ENCODE measurements at regions of chr2 and their contacts with region 1.

Region 1: GRCh38 chr2:173997269-173997668 is 32.1 kb upstream of the SP3 start:
- DNase-seq: peak; percentile 77 to 91 (median 87)
- ATAC-seq: peak; percentile 83 to 97 (median 96)
- H3K4me3 ChIP-seq: no peak overlapping the region
- H3K27ac ChIP-seq: peak overlapping the region in 6 of 12 donors; percentile 23 to 88 (median 51)
- H3K4me1 ChIP-seq: peaks cover 4 to 50% (median 33%) of the 10 kb centered on the region in 12 donors
- H3K27me3 ChIP-seq: no peaks in the 10 kb centered on the region
- CTCF ChIP-seq: no peak
- POLR2A ChIP-seq: no peak

Region 2: GRCh38 chr2:173965329-173966025 is 31.8 kb before region 1 on chr2 and contains the start of gene SP3:
- intact Hi-C with region 1: loop called in 1 of 10 experiments (anchors 5 kb)
- DNase-seq: peak; percentile 99
- ATAC-seq: peak; percentile 90 to 95 (median 92)
- H3K4me3 ChIP-seq: peak within 1 kb of the TSS; percentile 72 to 100 (median 96)
- H3K27ac ChIP-seq: peak within 1 kb of the TSS; percentile 97 to 100 (median 100)
- H3K4me1 ChIP-seq: peaks cover 0 to 40% (median 24%) of the 10 kb centered on the region in 12 donors
- H3K27me3 ChIP-seq: no peaks in the 10 kb centered on the region
- CTCF ChIP-seq: peak in 2 of 12 donors; percentile 7 to 19
- POLR2A ChIP-seq: peak; percentile 15 to 94
- total RNA-seq, gene SP3: 32.2 to 61.5 (median 42.0) TPM

Region 3: DNA sequence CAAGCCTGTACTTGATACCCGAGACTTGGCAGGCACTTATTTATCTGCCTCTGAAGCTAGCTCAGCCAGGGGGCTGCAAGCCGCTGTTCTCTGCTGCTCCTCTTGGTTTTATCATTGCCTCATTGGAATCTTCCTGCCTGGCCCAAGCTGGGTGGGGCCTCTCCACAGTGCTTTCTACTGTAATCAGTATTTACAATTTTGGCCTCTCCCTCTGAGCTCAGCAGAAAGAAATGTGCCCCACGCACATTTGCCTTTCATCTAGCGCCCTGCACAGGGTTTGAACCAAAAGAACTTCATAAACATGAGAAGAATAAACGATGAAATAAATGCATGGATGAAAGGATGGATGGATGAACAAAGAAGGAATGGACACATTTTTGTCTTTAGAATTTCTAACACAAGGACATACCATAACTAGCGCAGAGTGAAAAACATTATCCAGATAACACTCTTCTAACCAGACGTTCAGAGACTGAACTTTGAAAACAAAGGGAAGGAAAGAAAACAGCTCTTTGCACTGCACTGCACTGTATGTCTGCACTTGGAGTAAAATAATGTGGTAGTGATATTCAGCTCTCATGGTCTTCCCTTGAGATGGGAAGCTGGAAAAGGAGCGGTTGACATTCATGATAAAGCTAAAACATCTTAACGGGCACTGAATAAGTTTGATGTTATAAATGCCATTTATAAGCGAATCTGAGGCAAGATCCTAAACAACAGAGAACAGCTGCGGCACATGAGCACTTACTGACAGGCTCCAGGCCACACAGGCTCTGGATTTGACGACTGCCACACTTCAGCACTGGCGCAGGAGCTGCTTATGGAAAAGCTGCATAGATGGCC is 54.7 kb after region 1 on chr2:
- intact Hi-C with region 1: no loop called
- DNase-seq: peak in 2 of 5 donors; percentile 31 to 45
- ATAC-seq: peak; percentile 65 to 89 (median 82)
- H3K4me3 ChIP-seq: peak overlapping the region in 1 of 12 donors; percentile 24
- H3K27ac ChIP-seq: peak overlapping the region in 6 of 12 donors; percentile 18 to 49 (median 40)
- H3K4me1 ChIP-seq: peaks cover 0 to 30% (median 16%) of the 10 kb centered on the region in 12 donors
- H3K27me3 ChIP-seq: no peaks in the 10 kb centered on the region
- CTCF ChIP-seq: no peak
- POLR2A ChIP-seq: no peak